Keratinocyte (primary cell): ENCODE measurements at regions of chr2 and their contacts with region 1.

Region 1: GRCh38 chr2:219060821-219061791 is at the start of gene IHH:
- DNase-seq: no peak
- H3K4me3 ChIP-seq: peak within 1 kb of the TSS in 1 of 3 experiments; percentile 22
- H3K27ac ChIP-seq: no peak within 1 kb of the TSS
- H3K4me1 ChIP-seq: peaks cover 8% of the 10 kb centered on the region
- H3K27me3 ChIP-seq: peaks cover 76% of the 10 kb centered on the region
- CTCF ChIP-seq: no peak
- polyA plus RNA-seq, gene IHH: not detected in 3 replicates

Region 2: GRCh38 chr2:219149667-219150066 is 88.6 kb after region 1 on chr2:
- dilution Hi-C with region 1: loop called (anchors 5 kb)
- DNase-seq: no peak
- H3K4me3 ChIP-seq: no peak overlapping the region
- H3K27ac ChIP-seq: no peak overlapping the region
- H3K4me1 ChIP-seq: no peaks in the 10 kb centered on the region
- H3K27me3 ChIP-seq: no peaks in the 10 kb centered on the region
- CTCF ChIP-seq: no peak